Adrenal gland (tissue), 19 donors: ENCODE measurements at regions of chr22 and their contacts with region 1.

Region 1: GRCh38 chr22:40487663-40488249 is 117.4 kb downstream of the SGSM3 start:
- DNase-seq: no peak
- H3K4me3 ChIP-seq: no peak overlapping the region
- H3K27ac ChIP-seq: no peak overlapping the region
- H3K4me1 ChIP-seq: peaks cover 16 to 52% of the 10 kb centered on the region in 2 donors
- H3K27me3 ChIP-seq: no peaks in the 10 kb centered on the region
- CTCF ChIP-seq: peak; percentile 45 to 75 (median 62)
- POLR2A ChIP-seq: no peak

Region 2: DNA sequence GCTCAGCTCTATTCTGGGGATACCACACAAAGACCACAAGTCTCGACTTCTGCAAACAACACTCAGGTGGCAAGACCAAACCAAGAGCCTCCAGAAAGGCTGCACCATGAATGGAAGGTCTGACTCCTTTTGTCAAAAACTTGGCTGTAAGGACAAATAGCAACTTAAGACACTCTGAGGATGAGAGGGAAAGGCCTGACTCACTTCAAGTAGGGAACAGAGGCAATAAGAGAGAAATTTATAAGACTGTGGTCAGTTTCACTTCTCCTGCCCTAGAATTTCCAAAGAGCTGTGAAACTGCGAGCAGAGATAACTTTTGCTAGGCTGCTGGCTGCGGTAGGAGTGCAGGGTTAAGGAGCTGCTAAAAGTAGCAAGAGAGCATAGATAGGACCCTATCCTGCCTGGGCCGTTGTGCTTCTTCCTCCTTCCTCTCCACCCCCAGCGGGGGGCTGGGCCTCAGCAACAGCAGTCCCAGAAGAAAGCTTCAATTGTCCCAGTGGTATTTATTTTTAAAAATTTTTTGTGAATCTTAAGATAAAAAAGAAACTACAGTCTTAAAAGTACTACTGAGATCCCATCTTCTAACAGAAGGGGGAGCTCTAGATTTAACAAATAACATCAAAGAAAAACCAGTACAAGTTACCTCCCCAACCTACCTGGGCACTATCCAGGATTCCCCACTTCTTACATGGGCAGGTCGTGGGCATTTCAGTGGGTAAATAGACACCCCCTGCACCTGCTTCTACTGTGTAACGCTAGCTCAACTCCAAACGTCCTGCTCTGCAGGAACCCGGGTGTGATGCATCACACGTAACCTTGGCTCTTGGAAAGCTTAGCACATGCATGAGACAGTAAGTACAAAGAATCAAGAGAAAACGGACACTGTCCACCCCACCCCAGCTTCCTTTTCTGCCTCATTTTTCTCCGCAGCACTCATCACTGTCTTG is 51.0 kb before region 1 on chr22:
- intact Hi-C with region 1: loop called in 1 of 2 experiments (anchors 10 kb)
- DNase-seq: peak in 6 of 7 donors; percentile 60 to 77 (median 64)
- H3K4me3 ChIP-seq: peak overlapping the region in 1 of 4 donors; percentile 45
- H3K27ac ChIP-seq: peak overlapping the region in 3 of 5 donors; percentile 56 to 68 (median 68)
- H3K4me1 ChIP-seq: peaks cover 16 to 37% of the 10 kb centered on the region in 2 donors
- H3K27me3 ChIP-seq: no peaks in the 10 kb centered on the region
- CTCF ChIP-seq: peak; percentile 34 to 87 (median 73)
- POLR2A ChIP-seq: no peak

Region 3: GRCh38 chr22:40533712-40534378 is 46.1 kb after region 1 on chr22:
- intact Hi-C with region 1: no loop called
- DNase-seq: no peak
- H3K4me3 ChIP-seq: peak overlapping the region in 1 of 4 donors; percentile 23
- H3K27ac ChIP-seq: peak overlapping the region in 2 of 5 donors; percentile 25 to 36
- H3K4me1 ChIP-seq: peaks cover 23 to 44% of the 10 kb centered on the region in 2 donors
- H3K27me3 ChIP-seq: no peaks in the 10 kb centered on the region
- CTCF ChIP-seq: no peak
- POLR2A ChIP-seq: no peak